ENCODE measurements at regions of chr10 and their contacts with region 1.

Region 1: DNA sequence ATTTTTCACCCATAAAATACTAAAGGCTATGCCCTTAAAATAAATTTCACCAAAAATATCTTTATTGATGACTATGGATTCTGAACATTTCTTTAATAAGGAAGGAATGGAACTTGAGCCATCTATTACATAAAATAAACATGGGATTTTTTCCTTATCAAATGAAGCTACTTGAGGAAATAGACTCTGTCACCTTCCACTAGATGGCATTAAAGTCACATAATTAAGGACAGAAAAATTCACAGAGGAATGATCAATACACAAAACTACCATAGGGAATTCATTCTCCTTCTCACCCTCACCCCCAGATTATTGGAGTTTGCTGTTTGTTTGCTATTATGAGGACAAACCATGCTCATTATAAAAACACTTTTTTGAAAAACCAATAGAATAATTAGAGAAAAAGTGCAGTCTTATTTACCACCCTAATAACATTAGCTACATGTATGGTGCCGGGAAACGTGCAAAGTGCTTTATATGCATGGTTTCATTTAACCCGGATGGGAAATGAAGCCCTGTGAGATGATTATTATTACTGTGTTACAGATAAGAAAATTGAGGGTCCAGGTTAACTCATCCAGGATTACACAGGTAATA is 21.1 kb upstream of the FOXI2 start:
- DNase-seq: no peak
- H3K4me3 ChIP-seq: no peak overlapping the region
- H3K27ac ChIP-seq: no peak overlapping the region
- H3K4me1 ChIP-seq: no peaks in the 10 kb centered on the region
- H3K27me3 ChIP-seq: no peaks in the 10 kb centered on the region
- CTCF ChIP-seq: peak in 2 of 3 experiments; percentile 35 to 41; a peak in 2 of 4 replicates
- EP300 ChIP-seq: no peak
- POLR2A ChIP-seq: no peak
- RAD21 ChIP-seq: peak; percentile 71 to 76

Region 2: DNA sequence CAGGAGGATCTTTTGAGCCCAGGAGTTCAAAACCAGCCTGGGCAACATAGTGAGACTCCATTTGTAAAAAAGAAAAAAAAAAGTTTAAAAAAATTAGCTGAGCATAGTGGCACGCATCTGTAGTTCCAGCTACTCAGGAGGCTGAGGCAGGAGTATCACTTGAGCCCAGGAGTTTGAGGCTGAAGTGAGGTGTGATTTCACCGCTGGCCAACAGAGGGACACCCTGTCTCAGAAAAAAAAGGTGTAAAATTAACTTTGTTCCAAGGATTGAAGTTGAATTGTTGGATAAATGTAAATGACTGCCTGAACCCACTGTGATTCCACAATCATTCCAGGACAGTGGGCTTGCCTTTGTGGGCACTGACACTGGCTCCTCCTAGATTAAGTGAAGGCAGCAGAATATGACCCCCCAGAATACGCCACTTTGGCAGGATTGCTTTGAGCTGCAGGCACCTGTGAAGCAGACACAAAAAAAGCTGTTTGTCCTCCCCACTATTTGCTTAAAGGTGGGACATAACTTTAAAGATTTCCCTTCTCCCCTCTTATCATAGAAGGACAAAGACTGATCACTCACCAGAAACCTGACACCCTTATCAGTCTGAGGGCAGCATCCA is 36.1 kb before region 1 on chr10:
- CTCF ChIA-PET with region 1: interaction called, 14 read pairs
- POLR2A ChIA-PET with region 1: no interaction called
- DNase-seq: no peak
- H3K4me3 ChIP-seq: no peak overlapping the region
- H3K27ac ChIP-seq: no peak overlapping the region
- H3K4me1 ChIP-seq: no peaks in the 10 kb centered on the region
- H3K27me3 ChIP-seq: no peaks in the 10 kb centered on the region
- CTCF ChIP-seq: peak; percentile 35 to 59 (median 44); a peak in 3 of 4 replicates
- EP300 ChIP-seq: no peak
- POLR2A ChIP-seq: no peak
- RAD21 ChIP-seq: peak; percentile 57 to 61

Region 3: DNA sequence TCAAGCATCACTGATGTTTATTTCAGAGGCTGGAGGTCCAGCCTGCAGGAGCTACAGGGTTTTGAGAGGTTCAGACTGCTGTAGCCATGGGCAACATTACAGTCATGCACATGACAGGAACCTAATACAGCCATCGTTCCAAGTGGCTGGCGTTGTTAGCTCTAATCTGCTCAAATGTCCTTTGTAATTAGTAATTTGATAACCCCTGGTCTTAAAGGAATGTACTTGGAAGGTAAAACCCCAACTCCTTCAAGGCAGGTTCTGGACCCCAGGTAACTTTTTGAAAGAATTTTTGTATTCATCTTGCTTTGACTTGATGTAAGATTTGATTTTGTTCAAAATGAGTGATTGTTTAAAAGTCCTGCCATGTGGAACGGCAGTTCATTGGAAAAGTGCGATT is 13.6 kb before region 1 on chr10:
- CTCF ChIA-PET with region 1: interaction called, 13 read pairs
- POLR2A ChIA-PET with region 1: no interaction called
- DNase-seq: no peak
- H3K4me3 ChIP-seq: no peak overlapping the region
- H3K27ac ChIP-seq: no peak overlapping the region
- H3K4me1 ChIP-seq: no peaks in the 10 kb centered on the region
- H3K27me3 ChIP-seq: no peaks in the 10 kb centered on the region
- CTCF ChIP-seq: no peak
- EP300 ChIP-seq: no peak
- POLR2A ChIP-seq: no peak
- RAD21 ChIP-seq: no peak

Region 4: GRCh38 chr10:127755753-127756152 is 39.9 kb after region 1 on chr10:
- CTCF ChIA-PET with region 1: interaction called, 10 read pairs
- POLR2A ChIA-PET with region 1: no interaction called
- DNase-seq: no peak
- H3K4me3 ChIP-seq: no peak overlapping the region
- H3K27ac ChIP-seq: no peak overlapping the region
- H3K4me1 ChIP-seq: no peaks in the 10 kb centered on the region
- H3K27me3 ChIP-seq: no peaks in the 10 kb centered on the region
- CTCF ChIP-seq: no peak
- EP300 ChIP-seq: no peak
- POLR2A ChIP-seq: no peak
- RAD21 ChIP-seq: peak in 1 of 2 experiments; percentile 9; a peak in 1 of 4 replicates

Region 5: DNA sequence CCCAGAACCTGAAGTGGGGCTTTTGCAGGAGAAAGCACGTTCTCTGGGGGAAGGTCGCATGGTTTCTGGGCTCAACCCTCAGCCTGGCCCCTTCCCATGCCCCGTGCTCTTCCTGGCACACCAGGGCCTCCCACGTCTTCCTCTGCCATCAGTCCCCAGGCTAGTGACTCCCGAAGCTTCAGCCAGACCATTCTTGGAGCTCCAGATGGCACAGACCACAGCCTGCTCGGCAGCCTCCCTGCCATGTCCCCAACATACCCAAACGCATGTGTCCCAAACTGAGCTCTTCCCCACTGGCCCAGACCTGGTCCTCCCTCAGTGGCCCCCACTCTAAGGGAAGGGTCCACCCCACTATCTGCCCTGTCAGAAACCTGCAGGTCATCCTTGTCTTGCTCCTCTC is 129.9 kb after region 1 on chr10:
- CTCF ChIA-PET with region 1: interaction called, 141 read pairs
- POLR2A ChIA-PET with region 1: no interaction called
- DNase-seq: no peak
- H3K4me3 ChIP-seq: no peak overlapping the region
- H3K27ac ChIP-seq: no peak overlapping the region
- H3K4me1 ChIP-seq: no peaks in the 10 kb centered on the region
- H3K27me3 ChIP-seq: no peaks in the 10 kb centered on the region
- CTCF ChIP-seq: no peak
- EP300 ChIP-seq: no peak
- POLR2A ChIP-seq: no peak
- RAD21 ChIP-seq: no peak

Measured in H1 (cell line).